H1 (cell line): ENCODE measurements at regions of chr11 and their contacts with region 1.

Region 1: DNA sequence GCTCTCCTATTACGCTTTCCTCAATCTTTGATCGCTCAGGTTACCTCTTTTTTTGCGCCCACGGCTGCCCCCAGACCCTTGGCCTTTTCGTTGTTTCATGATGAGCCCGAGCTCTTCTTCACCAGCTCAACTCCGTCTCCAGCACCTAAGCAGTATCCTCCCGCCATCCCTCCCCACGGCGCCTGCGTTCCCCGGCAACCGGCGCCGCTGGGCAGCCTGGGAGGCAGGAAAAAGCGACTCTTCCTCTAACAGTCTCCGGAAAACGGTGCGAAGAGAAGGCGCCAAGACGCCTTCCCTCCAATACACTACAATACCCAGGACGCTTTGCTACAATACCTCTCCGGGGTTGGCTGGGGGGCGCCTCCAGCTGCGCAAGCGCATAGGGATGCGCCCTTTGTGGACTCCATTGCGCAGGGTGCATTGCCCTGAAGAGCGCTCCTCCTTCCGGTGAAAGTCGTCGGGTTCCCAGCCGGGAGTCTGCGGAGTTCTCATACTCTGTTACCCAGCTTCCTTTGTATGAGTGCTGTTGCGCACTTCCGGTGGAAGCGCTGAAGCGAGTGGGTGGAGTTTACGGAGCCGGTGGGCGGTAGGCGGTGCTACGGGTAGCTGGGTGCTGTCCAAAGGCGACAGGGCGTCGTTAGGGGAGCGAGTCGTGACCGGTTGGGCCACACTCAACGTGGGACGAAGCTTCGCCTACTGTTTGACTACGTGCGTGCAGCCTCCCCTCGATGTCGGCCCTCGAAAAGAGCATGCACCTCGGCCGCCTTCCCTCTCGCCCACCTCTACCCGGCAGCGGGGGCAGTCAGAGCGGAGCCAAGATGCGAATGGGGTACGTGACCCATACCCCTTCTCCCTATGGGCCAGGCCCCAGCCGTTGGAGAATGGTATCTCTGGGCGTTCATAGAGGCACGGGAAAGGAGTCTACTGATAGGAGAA is at the starts of genes C2CD3 and PPME1:
- DNase-seq: peak; percentile 91 to 98
- H3K4me3 ChIP-seq: peak within 1 kb of the TSS; percentile 75 to 90 (median 78)
- H3K27ac ChIP-seq: peak within 1 kb of the TSS; percentile 76
- H3K4me1 ChIP-seq: peaks cover 2 to 7% (median 4%) of the 10 kb centered on the region in 4 experiments; a peak in 3 of 7 replicates
- H3K27me3 ChIP-seq: no peaks in the 10 kb centered on the region
- CTCF ChIP-seq: peak; percentile 8 to 31 (median 27); a peak in 3 of 4 replicates
- EP300 ChIP-seq: no peak
- POLR2A ChIP-seq: peak in 1 of 2 experiments; percentile 88; a peak in 2 of 3 replicates
- RAD21 ChIP-seq: no peak
- total RNA-seq, gene C2CD3: 28.7 and 29.1 TPM in 2 replicates
- total RNA-seq, gene PPME1: 58.9 and 64.5 TPM in 2 replicates

Region 2: GRCh38 chr11:74147199-74147929 is 23.6 kb before region 1 on chr11:
- CTCF ChIA-PET with region 1: interaction called, 5 read pairs
- POLR2A ChIA-PET with region 1: interaction called, 18 read pairs
- DNase-seq: no peak
- H3K4me3 ChIP-seq: no peak overlapping the region
- H3K27ac ChIP-seq: no peak overlapping the region
- H3K4me1 ChIP-seq: no peaks in the 10 kb centered on the region
- H3K27me3 ChIP-seq: no peaks in the 10 kb centered on the region
- CTCF ChIP-seq: no peak
- EP300 ChIP-seq: no peak
- POLR2A ChIP-seq: no peak
- RAD21 ChIP-seq: no peak